ENCODE measurements at regions of chrX and their contacts with region 1.

Region 1: GRCh38 chrX:65731684-65732289 is 64.3 kb downstream of the MSN start:
- DNase-seq: peak in 1 of 2 donors; percentile 64
- H3K4me3 ChIP-seq: no peak overlapping the region
- CTCF ChIP-seq: no peak
- POLR2A ChIP-seq: no peak

Region 2: GRCh38 chrX:65985922-65986588 is 254.3 kb after region 1 on chrX:
- intact Hi-C with region 1: loop called (anchors 10 kb)
- DNase-seq: peak in 1 of 2 donors; percentile 24
- H3K4me3 ChIP-seq: no peak overlapping the region
- CTCF ChIP-seq: no peak
- POLR2A ChIP-seq: no peak

Measured in lower leg skin (tissue), 4 donors.